HepG2 (cell line): ENCODE measurements at regions of chr11 and their contacts with region 1.

Region 1: DNA sequence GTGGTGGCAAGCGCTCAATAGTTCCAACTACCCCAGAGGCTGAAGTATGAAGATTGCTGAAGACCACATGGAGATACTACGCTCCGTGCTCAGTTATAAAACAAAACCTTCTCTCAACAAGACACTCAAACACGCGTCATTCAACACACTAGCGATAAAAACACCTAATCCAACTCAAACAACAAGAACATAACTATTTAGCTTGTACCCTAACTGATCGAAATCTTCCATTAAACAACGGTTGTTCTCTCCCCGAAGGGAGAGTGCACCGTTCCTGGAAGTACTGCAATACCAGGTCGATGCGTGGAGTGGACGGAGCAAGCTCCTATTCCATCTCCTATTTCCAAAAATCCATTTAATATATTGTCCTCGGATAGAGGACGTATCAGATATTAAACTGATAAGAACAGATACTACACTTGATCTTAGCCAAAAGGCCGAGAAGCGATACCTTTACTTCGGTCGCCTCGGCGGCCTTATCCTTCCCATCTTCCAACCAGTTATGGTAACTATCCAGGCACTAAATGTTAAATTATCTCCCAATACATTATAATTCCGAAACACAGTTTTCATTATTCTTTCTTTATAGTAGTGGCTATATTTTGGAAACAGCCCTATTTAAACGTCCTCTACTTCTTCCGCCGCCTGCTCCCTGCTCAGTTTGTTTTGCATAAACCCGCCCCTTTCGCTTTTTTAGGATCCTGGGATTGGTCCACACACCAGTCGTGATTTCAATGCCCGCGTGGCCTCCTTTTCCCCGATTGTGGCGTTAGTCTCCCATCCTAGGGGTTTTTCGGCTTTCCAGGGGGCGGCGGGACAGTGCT is 2.2 kb upstream of the WDR74 start:
- DNase-seq: peak; percentile 98
- ATAC-seq: peak; percentile 78
- H3K4me3 ChIP-seq: peak overlapping the region; percentile 85 to 100 (median 97)
- H3K27ac ChIP-seq: peak overlapping the region; percentile 98
- H3K4me1 ChIP-seq: peaks cover 43% of the 10 kb centered on the region
- H3K27me3 ChIP-seq: no peaks in the 10 kb centered on the region; a peak in 1 of 5 replicates
- CTCF ChIP-seq: peak; percentile 39
- EP300 ChIP-seq: peak in 1 of 2 experiments; percentile 74; a peak in 2 of 4 replicates
- POLR2A ChIP-seq: peak; percentile 99 to 100
- RAD21 ChIP-seq: peak; percentile 82

Region 2: GRCh38 chr11:62591448-62592145 is 250.0 kb before region 1 on chr11 and contains the start of gene TUT1:
- CTCF ChIA-PET with region 1: no interaction called
- POLR2A ChIA-PET with region 1: interaction called, 31 read pairs
- in situ Hi-C with region 1: no loop called
- intact Hi-C with region 1: no loop called
- DNase-seq: peak; percentile 98
- ATAC-seq: peak; percentile 86
- H3K4me3 ChIP-seq: peak within 1 kb of the TSS; percentile 81 to 89 (median 82)
- H3K27ac ChIP-seq: peak within 1 kb of the TSS; percentile 85
- H3K4me1 ChIP-seq: peaks cover 51% of the 10 kb centered on the region
- H3K27me3 ChIP-seq: no peaks in the 10 kb centered on the region; a peak in 1 of 5 replicates
- CTCF ChIP-seq: no peak; the same call in 1 of the 2 replicates
- EP300 ChIP-seq: peak in 1 of 2 experiments; percentile 60; a peak in 1 of 4 replicates
- POLR2A ChIP-seq: peak; percentile 96 to 97
- RAD21 ChIP-seq: no peak; the same call in 1 of the 2 replicates
- total RNA-seq, gene TUT1: 8.5 and 9.7 TPM in 2 replicates

Region 3: DNA sequence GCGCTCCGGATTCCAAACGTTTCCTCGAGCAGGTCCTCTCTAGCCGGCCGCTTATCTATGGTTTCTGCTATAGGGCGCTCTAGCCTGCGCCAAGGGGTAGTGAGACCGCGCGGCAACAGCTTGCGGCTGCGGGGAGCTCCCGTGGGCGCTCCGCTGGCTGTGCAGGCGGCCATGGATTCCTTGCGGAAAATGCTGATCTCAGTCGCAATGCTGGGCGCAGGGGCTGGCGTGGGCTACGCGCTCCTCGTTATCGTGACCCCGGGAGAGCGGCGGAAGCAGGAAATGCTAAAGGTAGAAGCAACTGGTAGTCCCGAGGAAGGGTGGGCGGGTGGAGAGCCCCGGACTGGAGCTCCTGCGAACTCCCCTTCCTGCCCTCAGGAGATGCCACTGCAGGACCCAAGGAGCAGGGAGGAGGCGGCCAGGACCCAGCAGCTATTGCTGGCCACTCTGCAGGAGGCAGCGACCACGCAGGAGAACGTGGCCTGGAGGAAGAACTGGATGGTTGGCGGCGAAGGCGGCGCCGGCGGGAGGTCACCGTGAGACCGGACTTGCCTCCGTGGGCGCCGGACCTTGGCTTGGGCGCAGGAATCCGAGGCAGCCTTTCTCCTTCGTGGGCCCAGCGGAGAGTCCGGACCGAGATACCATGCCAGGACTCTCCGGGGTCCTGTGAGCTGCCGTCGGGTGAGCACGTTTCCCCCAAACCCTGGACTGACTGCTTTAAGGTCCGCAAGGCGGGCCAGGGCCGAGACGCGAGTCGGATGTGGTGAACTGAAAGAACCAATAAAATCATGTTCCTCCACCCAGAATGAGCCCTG is 169.8 kb before region 1 on chr11 and contains the starts of genes LBHD1 and UQCC3:
- CTCF ChIA-PET with region 1: no interaction called
- POLR2A ChIA-PET with region 1: interaction called, 19 read pairs
- in situ Hi-C with region 1: no loop called
- intact Hi-C with region 1: no loop called
- DNase-seq: peak; percentile 79
- ATAC-seq: peak; percentile 83
- H3K4me3 ChIP-seq: peak within 1 kb of the TSS; percentile 76 to 98 (median 91)
- H3K27ac ChIP-seq: peak within 1 kb of the TSS; percentile 90
- H3K4me1 ChIP-seq: peaks cover 59% of the 10 kb centered on the region
- H3K27me3 ChIP-seq: no peaks in the 10 kb centered on the region; a peak in 1 of 5 replicates
- CTCF ChIP-seq: no peak; the same call in none of the 2 replicates
- EP300 ChIP-seq: peak in 1 of 2 experiments; percentile 21; a peak in 1 of 4 replicates
- POLR2A ChIP-seq: peak; percentile 80 to 82
- RAD21 ChIP-seq: no peak
- total RNA-seq, gene LBHD1: 1.4 and 3.7 TPM in 2 replicates
- total RNA-seq, gene UQCC3: 12.1 and 16.0 TPM in 2 replicates

Region 4: GRCh38 chr11:62771144-62772021 is 70.2 kb before region 1 on chr11 and contains the start of gene TAF6L:
- CTCF ChIA-PET with region 1: no interaction called
- POLR2A ChIA-PET with region 1: interaction called, 57 read pairs
- in situ Hi-C with region 1: no loop called
- intact Hi-C with region 1: no loop called
- DNase-seq: peak; percentile 97
- ATAC-seq: peak; percentile 93
- H3K4me3 ChIP-seq: peak within 1 kb of the TSS; percentile 64 to 78 (median 65)
- H3K27ac ChIP-seq: peak within 1 kb of the TSS; percentile 92
- H3K4me1 ChIP-seq: peaks cover 23% of the 10 kb centered on the region
- H3K27me3 ChIP-seq: no peaks in the 10 kb centered on the region; a peak in 1 of 5 replicates
- CTCF ChIP-seq: 0 out of 2 replicates have a peak, but pooled peaks have one; percentile 8
- EP300 ChIP-seq: no peak
- POLR2A ChIP-seq: peak; percentile 60 to 88; a peak in 3 of 4 replicates
- RAD21 ChIP-seq: no peak; the same call in 1 of the 2 replicates
- total RNA-seq, gene TAF6L: 13.4 and 19.4 TPM in 2 replicates

Region 5: DNA sequence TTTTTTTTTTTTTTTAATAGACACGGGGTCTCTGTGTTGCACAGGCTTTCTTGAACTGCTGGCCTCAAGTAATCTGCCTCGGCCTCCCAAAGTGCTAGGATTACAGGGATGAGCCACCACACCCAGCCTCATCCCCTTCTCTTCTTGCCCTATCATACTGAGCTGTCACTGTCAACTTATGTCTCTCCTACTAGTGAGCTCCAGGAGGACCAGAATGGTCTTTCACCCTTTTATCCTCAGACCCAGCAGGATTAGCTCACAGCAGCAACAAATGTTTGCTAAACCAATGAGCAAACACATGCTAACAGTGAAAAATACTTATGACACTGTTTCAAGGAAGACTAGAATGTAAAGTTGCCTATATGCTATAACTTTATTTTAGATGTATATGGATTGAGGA is 29.9 kb before region 1 on chr11:
- CTCF ChIA-PET with region 1: no interaction called
- POLR2A ChIA-PET with region 1: interaction called, 53 read pairs
- in situ Hi-C with region 1: no loop called
- intact Hi-C with region 1: no loop called
- DNase-seq: peak; percentile 50
- ATAC-seq: peak; percentile 89
- H3K4me3 ChIP-seq: no peak overlapping the region
- H3K27ac ChIP-seq: no peak overlapping the region
- H3K4me1 ChIP-seq: peaks cover 18% of the 10 kb centered on the region
- H3K27me3 ChIP-seq: no peaks in the 10 kb centered on the region
- CTCF ChIP-seq: no peak
- EP300 ChIP-seq: no peak
- POLR2A ChIP-seq: no peak
- RAD21 ChIP-seq: no peak

Region 6: GRCh38 chr11:62880803-62881578 is 39.4 kb after region 1 on chr11 and contains the start of gene SLC3A2:
- CTCF ChIA-PET with region 1: no interaction called
- POLR2A ChIA-PET with region 1: interaction called, 90 read pairs
- in situ Hi-C with region 1: no loop called
- intact Hi-C with region 1: no loop called
- DNase-seq: peak; percentile 74
- ATAC-seq: peak; percentile 91
- H3K4me3 ChIP-seq: peak within 1 kb of the TSS; percentile 92 to 99 (median 94)
- H3K27ac ChIP-seq: peak within 1 kb of the TSS; percentile 93
- H3K4me1 ChIP-seq: peaks cover 56% of the 10 kb centered on the region
- H3K27me3 ChIP-seq: no peaks in the 10 kb centered on the region; a peak in 1 of 5 replicates
- CTCF ChIP-seq: peak; percentile 94
- EP300 ChIP-seq: no peak
- POLR2A ChIP-seq: peak; percentile 96 to 98
- RAD21 ChIP-seq: peak; percentile 84
- total RNA-seq, gene SLC3A2: 94.8 and 213 TPM in 2 replicates

Region 7: GRCh38 chr11:62958547-62959421 is 117.2 kb after region 1 on chr11:
- CTCF ChIA-PET with region 1: no interaction called
- POLR2A ChIA-PET with region 1: no interaction called
- in situ Hi-C with region 1: no loop called
- intact Hi-C with region 1: no loop called
- DNase-seq: no peak
- ATAC-seq: no peak
- H3K4me3 ChIP-seq: no peak overlapping the region
- H3K27ac ChIP-seq: no peak overlapping the region
- H3K4me1 ChIP-seq: no peaks in the 10 kb centered on the region
- H3K27me3 ChIP-seq: peaks cover 2 to 7% of the 10 kb centered on the region in 2 experiments; a peak in 2 of 5 replicates
- CTCF ChIP-seq: no peak
- EP300 ChIP-seq: no peak
- POLR2A ChIP-seq: no peak
- RAD21 ChIP-seq: no peak

Region 8: GRCh38 chr11:63023841-63024648 is 182.5 kb after region 1 on chr11:
- CTCF ChIA-PET with region 1: no interaction called
- POLR2A ChIA-PET with region 1: no interaction called
- in situ Hi-C with region 1: no loop called
- intact Hi-C with region 1: no loop called
- DNase-seq: peak; percentile 55
- ATAC-seq: peak; percentile 85
- H3K4me3 ChIP-seq: no peak overlapping the region
- H3K27ac ChIP-seq: no peak overlapping the region
- H3K4me1 ChIP-seq: peaks cover 10% of the 10 kb centered on the region; the same call in 1 of the 2 replicates
- H3K27me3 ChIP-seq: peaks cover 3 to 11% of the 10 kb centered on the region in 2 experiments; a peak in 3 of 5 replicates
- CTCF ChIP-seq: peak; percentile 94
- EP300 ChIP-seq: no peak
- POLR2A ChIP-seq: no peak
- RAD21 ChIP-seq: peak; percentile 78

Region 9: GRCh38 chr11:63262547-63262946 is 421.0 kb after region 1 on chr11:
- CTCF ChIA-PET with region 1: no interaction called
- POLR2A ChIA-PET with region 1: no interaction called
- in situ Hi-C with region 1: no loop called
- intact Hi-C with region 1: no loop called
- DNase-seq: no peak
- ATAC-seq: no peak
- H3K4me3 ChIP-seq: no peak overlapping the region
- H3K27ac ChIP-seq: no peak overlapping the region
- H3K4me1 ChIP-seq: peaks cover 28% of the 10 kb centered on the region
- H3K27me3 ChIP-seq: no peaks in the 10 kb centered on the region; a peak in 1 of 5 replicates
- CTCF ChIP-seq: no peak
- EP300 ChIP-seq: no peak
- POLR2A ChIP-seq: no peak
- RAD21 ChIP-seq: no peak